Heart left ventricle (tissue), 16 donors: ENCODE measurements at regions of chr14 and their contacts with region 1.

Region 1: DNA sequence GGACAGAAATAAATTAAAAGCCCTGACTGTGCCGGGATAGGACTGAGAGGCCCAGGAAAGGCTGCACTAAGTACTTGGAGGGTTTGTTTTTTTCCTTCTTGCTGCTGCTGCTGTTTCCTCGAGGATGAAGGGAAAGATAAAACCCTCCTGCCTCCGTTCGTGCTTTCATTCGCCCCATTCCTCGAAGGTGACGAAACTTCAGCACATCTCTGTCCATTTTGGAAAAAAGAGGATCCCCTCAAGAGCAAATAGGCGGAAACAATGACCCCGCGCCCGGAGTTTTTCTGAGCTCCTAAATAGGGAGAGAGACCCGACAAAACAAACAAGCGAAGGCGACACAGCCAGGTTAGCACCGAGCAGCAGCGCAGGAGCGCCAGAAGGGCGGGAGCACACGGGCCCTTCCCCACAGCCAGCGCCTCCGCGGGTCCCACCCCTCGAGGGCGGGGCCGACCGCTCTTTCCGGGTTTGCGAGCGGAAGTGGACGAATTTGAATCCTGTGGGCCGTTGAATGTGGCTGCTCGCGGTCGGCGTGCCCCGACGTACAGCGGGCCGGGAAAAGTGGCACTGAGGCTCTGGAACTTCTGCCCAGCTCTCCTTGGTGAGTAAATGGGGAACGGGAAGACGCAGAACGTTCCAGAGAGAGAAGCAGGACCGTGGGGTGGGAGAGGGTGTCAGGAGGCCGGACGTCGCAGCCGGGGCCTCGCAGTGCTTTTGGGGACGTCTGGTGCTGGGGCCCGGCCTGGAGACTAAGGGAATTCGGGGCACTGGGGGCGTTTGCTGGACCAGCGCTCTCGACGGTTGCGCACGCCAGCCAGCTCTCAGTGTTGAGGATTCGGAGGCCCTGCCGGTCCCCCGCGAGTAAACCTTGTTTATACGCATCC is at the start of gene G2E3:
- DNase-seq: peak; percentile 84 to 95 (median 89)
- ATAC-seq: peak; percentile 99 to 100 (median 100)
- H3K4me3 ChIP-seq: peak within 1 kb of the TSS; percentile 68 to 96 (median 84)
- H3K27ac ChIP-seq: peak within 1 kb of the TSS in 11 of 12 donors; percentile 32 to 84 (median 73)
- H3K4me1 ChIP-seq: peaks cover 0 to 20% (median 7%) of the 10 kb centered on the region in 12 donors
- H3K27me3 ChIP-seq: no peaks in the 10 kb centered on the region
- CTCF ChIP-seq: no peak
- POLR2A ChIP-seq: peak in 1 of 2 donors; percentile 63
- total RNA-seq, gene G2E3: 2.8 to 10.2 (median 8.2) TPM

Region 2: GRCh38 chr14:30621940-30622830 is 63.3 kb after region 1 on chr14 and contains the start of gene SCFD1:
- intact Hi-C with region 1: loop called in 1 of 10 experiments (anchors 5 kb)
- DNase-seq: peak; percentile 93 to 97 (median 96)
- ATAC-seq: peak; percentile 100
- H3K4me3 ChIP-seq: peak within 1 kb of the TSS; percentile 64 to 88 (median 78)
- H3K27ac ChIP-seq: peak within 1 kb of the TSS; percentile 35 to 92 (median 86)
- H3K4me1 ChIP-seq: peaks cover 0 to 50% (median 21%) of the 10 kb centered on the region in 12 donors
- H3K27me3 ChIP-seq: no peaks in the 10 kb centered on the region
- CTCF ChIP-seq: no peak
- POLR2A ChIP-seq: peak; percentile 49 to 94
- total RNA-seq, gene SCFD1: 23.5 to 56.2 (median 41.4) TPM